Activated naive CD4-positive, alpha-beta T cell treated with anti-CD3 and anti-CD28 coated beads for 36 hours (primary cell): ENCODE measurements at regions of chr6 and their contacts with region 1.

Region 1: GRCh38 chr6:7282097-7282906 is 30.7 kb downstream of the SSR1 start:
- DNase-seq: peak; percentile 36
- H3K4me3 Mint-ChIP-seq: no peak overlapping the region
- H3K27ac Mint-ChIP-seq: peak overlapping the region; percentile 55
- H3K4me1 Mint-ChIP-seq: peaks cover 19% of the 10 kb centered on the region
- H3K27me3 Mint-ChIP-seq: no peaks in the 10 kb centered on the region

Region 2: DNA sequence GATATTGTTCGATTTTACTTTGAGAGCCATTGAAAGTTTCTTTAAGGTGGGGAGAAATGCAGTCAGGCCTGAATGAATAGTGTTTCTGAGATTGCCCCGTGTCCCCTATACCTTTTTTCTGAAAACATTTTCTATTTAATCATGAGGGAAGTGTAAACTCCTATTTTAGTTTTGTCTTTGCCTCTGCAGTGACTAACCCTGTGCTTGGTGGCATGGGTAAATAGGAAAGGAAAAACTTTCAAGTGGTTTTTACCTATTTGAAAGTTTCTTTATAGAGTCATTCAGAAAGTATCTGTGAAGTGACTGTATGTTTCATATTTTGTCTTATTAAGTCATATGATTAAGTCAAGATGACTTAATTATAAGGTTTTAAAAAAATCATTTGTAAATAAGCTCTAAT is 322.2 kb after region 1 on chr6:
- CTCF ChIA-PET with region 1: no interaction called
- intact Hi-C with region 1: loop called (anchors 5 kb)
- DNase-seq: no peak
- H3K4me3 Mint-ChIP-seq: no peak overlapping the region
- H3K27ac Mint-ChIP-seq: no peak overlapping the region
- H3K4me1 Mint-ChIP-seq: peaks cover 19% of the 10 kb centered on the region
- H3K27me3 Mint-ChIP-seq: no peaks in the 10 kb centered on the region